PC-9 (cell line): ENCODE measurements at regions of chr17 and their contacts with region 1.

Region 1: GRCh38 chr17:8532021-8532420 is 96.3 kb downstream of the NDEL1 start:
- DNase-seq: no peak
- H3K4me3 ChIP-seq: no peak overlapping the region
- H3K27ac ChIP-seq: no peak overlapping the region
- H3K4me1 ChIP-seq: no peaks in the 10 kb centered on the region
- H3K27me3 ChIP-seq: peaks cover 75% of the 10 kb centered on the region
- CTCF ChIP-seq: no peak

Region 2: GRCh38 chr17:8420041-8420934 is 111.7 kb before region 1 on chr17:
- CTCF ChIA-PET with region 1: interaction called, 12 read pairs
- POLR2A ChIA-PET with region 1: no interaction called
- intact Hi-C with region 1: no loop called
- DNase-seq: peak; percentile 46 to 48
- H3K4me3 ChIP-seq: no peak overlapping the region
- H3K27ac ChIP-seq: no peak overlapping the region
- H3K4me1 ChIP-seq: peaks cover 14% of the 10 kb centered on the region
- H3K27me3 ChIP-seq: no peaks in the 10 kb centered on the region
- CTCF ChIP-seq: no peak

Region 3: GRCh38 chr17:8991514-8992285 is 459.7 kb after region 1 on chr17:
- CTCF ChIA-PET with region 1: no interaction called
- POLR2A ChIA-PET with region 1: no interaction called
- intact Hi-C with region 1: no loop called
- DNase-seq: peak; percentile 40 to 61
- H3K4me3 ChIP-seq: no peak overlapping the region
- H3K27ac ChIP-seq: no peak overlapping the region
- H3K4me1 ChIP-seq: no peaks in the 10 kb centered on the region
- H3K27me3 ChIP-seq: no peaks in the 10 kb centered on the region
- CTCF ChIP-seq: peak; percentile 74